ENCODE measurements at regions of chr11 and their contacts with region 1.

Region 1: GRCh38 chr11:57800444-57801182 is 39.0 kb downstream of the CTNND1 start:
- DNase-seq: peak; percentile 40
- H3K4me3 Mint-ChIP-seq: peak overlapping the region; percentile 11
- H3K27ac Mint-ChIP-seq: peak overlapping the region; percentile 43
- H3K4me1 Mint-ChIP-seq: peaks cover 57% of the 10 kb centered on the region
- H3K27me3 Mint-ChIP-seq: no peaks in the 10 kb centered on the region
- CTCF ChIP-seq: peak; percentile 72

Region 2: DNA sequence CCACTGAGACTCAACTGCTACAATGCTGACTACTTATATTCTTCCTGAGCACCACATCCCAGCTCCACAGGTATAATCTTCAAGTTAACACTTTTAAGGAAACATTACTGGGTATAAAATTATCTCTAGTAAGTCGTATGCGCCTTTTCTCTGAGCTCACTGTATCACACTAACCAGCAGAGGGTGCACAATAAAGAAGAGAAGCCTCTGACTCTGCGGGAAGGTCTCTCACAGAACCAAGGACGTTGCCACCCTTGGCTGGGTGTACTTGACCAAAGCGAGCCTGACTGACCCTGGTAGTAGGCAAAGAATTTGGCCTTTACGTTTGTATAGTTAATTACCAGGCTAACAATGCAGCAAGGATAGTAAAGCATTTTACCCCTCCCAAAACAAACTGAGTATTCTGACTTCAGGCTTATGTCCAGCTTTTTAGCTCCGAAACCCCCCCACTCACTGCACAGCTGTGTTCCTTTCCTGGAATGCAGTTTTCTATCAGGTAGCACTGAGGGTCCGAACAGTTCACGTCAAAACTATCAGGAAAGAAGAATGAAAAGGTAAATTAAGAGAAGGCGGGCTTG is 48.8 kb before region 1 on chr11 and contains the start of gene BTBD18:
- CTCF ChIA-PET with region 1: interaction called, 55 read pairs
- intact Hi-C with region 1: no loop called
- DNase-seq: peak; percentile 54
- H3K4me3 Mint-ChIP-seq: no peak within 1 kb of the TSS
- H3K27ac Mint-ChIP-seq: peak within 1 kb of the TSS; percentile 53
- H3K4me1 Mint-ChIP-seq: peaks cover 21% of the 10 kb centered on the region
- H3K27me3 Mint-ChIP-seq: no peaks in the 10 kb centered on the region
- CTCF ChIP-seq: peak; percentile 54
- total RNA-seq, gene BTBD18: not detected in 2 replicates

Region 3: DNA sequence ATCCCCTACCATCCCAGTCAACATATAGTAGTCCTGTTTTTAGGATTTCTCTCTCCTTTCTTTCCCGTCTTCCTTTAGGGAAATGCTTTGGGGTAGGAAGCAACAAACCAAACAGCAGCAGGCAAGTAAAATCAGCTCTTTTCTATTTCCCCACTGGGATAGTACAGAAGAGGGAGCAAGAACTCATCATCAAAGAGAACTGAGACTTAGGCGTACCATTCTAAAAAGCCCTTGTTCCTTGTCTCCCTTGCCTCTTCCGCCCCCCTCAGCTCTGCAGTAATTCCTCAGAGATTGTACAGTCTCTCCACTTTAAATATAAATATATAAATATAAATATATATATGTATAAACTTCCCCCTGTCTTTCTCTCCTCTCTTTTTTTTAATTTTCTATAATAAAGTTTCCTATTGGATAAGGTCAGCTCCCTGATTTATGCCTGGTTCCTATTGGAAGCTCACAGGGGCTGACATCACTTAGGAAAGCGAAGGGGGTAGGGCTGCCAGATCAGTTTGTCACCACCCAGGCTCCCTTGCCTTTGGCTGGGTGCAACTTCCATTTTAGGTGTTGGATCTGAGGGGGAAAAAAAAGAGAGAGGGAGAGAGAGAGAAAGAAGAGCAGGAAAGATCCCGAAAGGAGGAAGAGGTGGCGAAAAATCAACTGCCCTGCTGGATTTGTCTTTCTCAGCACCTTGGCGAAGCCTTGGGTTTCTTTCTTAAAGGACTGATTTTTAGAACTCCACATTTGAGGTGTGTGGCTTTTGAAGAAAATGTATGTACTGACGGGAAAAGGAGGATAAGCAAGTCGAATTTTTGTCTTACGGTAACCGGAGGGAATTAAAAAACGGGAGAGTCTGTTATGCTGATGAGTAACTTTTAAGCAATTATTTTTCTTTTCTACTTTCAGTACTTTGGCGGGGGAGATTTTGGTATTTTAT is 39.0 kb before region 1 on chr11 and contains the start of gene CTNND1:
- CTCF ChIA-PET with region 1: interaction called, 30 read pairs
- intact Hi-C with region 1: loop called (anchors 2 kb)
- DNase-seq: peak; percentile 89
- H3K4me3 Mint-ChIP-seq: peak within 1 kb of the TSS; percentile 88
- H3K27ac Mint-ChIP-seq: peak within 1 kb of the TSS; percentile 99
- H3K4me1 Mint-ChIP-seq: peaks cover 22% of the 10 kb centered on the region
- H3K27me3 Mint-ChIP-seq: no peaks in the 10 kb centered on the region
- CTCF ChIP-seq: no peak
- total RNA-seq, gene CTNND1: 318 and 323 TPM in 2 replicates

Region 4: DNA sequence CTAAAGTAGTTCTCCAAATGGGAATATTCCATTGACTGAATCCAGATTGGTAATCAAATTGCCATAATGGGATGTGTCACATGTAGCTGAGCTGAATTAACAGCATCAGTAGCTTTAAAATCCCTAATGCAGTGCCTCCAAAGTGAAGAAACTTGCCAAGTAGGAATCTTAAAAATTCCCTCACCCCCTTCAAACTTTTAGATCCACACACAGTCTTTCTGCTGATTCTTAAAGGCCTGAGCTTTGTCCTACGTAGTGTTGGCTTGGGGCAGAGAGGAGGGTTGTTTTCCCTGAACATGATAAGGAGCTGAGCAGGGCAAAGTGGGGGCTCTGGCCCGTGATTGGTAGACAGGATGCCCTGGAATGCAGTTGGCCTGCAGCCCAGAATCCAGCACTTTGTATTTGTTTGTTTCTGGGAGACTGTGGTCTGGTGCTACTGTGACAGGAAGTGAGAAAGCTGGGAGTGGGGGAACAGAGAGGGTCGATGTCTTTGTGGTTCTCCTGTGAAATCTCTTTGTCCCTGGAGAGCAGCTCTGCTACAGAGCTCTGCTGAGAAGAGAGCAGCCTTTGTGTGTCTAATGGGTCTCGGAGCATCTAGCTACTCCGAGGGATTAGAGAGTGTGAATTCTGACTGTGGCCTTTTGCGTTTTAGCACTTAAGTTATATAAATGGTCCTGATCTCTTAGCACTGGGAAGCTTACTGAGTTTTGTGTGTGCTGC is 22.1 kb before region 1 on chr11:
- CTCF ChIA-PET with region 1: interaction called, 15 read pairs
- intact Hi-C with region 1: loop called (anchors 1 kb)
- DNase-seq: peak; percentile 93
- H3K4me3 Mint-ChIP-seq: peak overlapping the region; percentile 66
- H3K27ac Mint-ChIP-seq: peak overlapping the region; percentile 99
- H3K4me1 Mint-ChIP-seq: peaks cover 93% of the 10 kb centered on the region
- H3K27me3 Mint-ChIP-seq: no peaks in the 10 kb centered on the region
- CTCF ChIP-seq: no peak

Region 5: DNA sequence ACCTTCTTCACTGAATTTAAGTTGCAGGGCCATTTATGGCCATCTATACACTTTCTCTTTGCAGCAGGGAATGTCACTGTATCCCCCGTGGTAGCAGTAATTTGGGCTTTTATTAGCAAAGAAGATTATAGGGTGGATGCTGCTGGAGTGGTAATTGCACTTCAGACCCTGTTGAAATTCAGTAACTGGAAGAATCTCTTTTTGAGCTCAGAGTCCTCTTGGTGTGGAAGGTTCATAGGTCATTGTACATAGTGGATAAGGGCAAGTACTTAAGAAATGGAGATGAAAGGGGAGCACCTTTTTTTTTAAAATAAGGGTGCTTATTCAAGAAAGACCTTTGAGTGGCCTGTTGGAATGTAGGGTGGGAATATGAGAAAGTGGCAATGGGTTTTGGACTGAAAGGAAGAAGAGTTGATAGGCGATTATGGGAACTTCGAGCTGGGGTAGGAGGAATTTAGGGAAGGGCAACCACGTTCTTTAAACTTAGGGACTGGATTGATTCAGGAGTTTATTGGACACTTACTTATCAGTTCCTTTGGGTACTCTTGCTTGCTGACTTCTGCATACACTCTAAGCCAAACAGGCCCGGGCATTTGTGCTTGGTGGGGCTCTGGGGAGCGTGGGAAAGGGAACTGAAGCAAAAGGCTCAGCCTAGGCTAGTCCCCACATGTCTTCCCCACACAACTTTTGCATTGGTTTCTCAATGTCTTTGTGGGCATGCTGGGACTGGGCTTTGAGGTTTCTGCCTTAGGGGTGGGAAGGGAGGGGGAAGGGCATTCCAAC is 12.5 kb before region 1 on chr11:
- CTCF ChIA-PET with region 1: interaction called, 3 read pairs
- intact Hi-C with region 1: loop called (anchors 1 kb)
- DNase-seq: no peak
- H3K4me3 Mint-ChIP-seq: peak overlapping the region; percentile 4
- H3K27ac Mint-ChIP-seq: peak overlapping the region; percentile 45
- H3K4me1 Mint-ChIP-seq: peaks cover 77% of the 10 kb centered on the region
- H3K27me3 Mint-ChIP-seq: no peaks in the 10 kb centered on the region
- CTCF ChIP-seq: no peak

Region 6: GRCh38 chr11:57842873-57843272 is 42.3 kb after region 1 on chr11:
- CTCF ChIA-PET with region 1: no interaction called
- intact Hi-C with region 1: no loop called
- DNase-seq: no peak
- H3K4me3 Mint-ChIP-seq: no peak overlapping the region
- H3K27ac Mint-ChIP-seq: no peak overlapping the region
- H3K4me1 Mint-ChIP-seq: no peaks in the 10 kb centered on the region
- H3K27me3 Mint-ChIP-seq: no peaks in the 10 kb centered on the region
- CTCF ChIP-seq: no peak